ENCODE measurements at regions of chr5 and their contacts with region 1.

Region 1: GRCh38 chr5:177592010-177592834 is at the start of gene TMED9:
- DNase-seq: peak; percentile 81 to 93 (median 86)
- ATAC-seq: peak; percentile 81 to 99 (median 97)
- H3K4me3 ChIP-seq: peak within 1 kb of the TSS; percentile 73 to 99 (median 84)
- H3K27ac ChIP-seq: peak within 1 kb of the TSS in 11 of 12 donors; percentile 36 to 89 (median 77)
- H3K4me1 ChIP-seq: peaks cover 0 to 20% (median 14%) of the 10 kb centered on the region in 12 donors
- H3K27me3 ChIP-seq: peaks cover 0 to 15% (median 0%) of the 10 kb centered on the region in 9 donors
- CTCF ChIP-seq: peak in 5 of 12 donors; percentile 9 to 45 (median 33)
- POLR2A ChIP-seq: peak; percentile 34 to 93
- total RNA-seq, gene TMED9: 46.2 to 138 (median 77.0) TPM

Region 2: GRCh38 chr5:177516604-177517568 is 75.3 kb before region 1 on chr5 and contains the start of gene DDX41:
- intact Hi-C with region 1: loop called in 2 of 10 experiments (anchors 10 kb)
- DNase-seq: peak; percentile 97 to 99 (median 98)
- ATAC-seq: peak; percentile 91 to 95 (median 92)
- H3K4me3 ChIP-seq: peak within 1 kb of the TSS; percentile 61 to 100 (median 88)
- H3K27ac ChIP-seq: peak within 1 kb of the TSS; percentile 79 to 94 (median 89)
- H3K4me1 ChIP-seq: peaks cover 0 to 33% (median 15%) of the 10 kb centered on the region in 12 donors
- H3K27me3 ChIP-seq: no peaks in the 10 kb centered on the region
- CTCF ChIP-seq: peak in 4 of 12 donors; percentile 8 to 20 (median 13)
- POLR2A ChIP-seq: peak in 1 of 2 donors; percentile 66
- total RNA-seq, gene DDX41: 24.4 to 53.8 (median 37.7) TPM

Region 3: GRCh38 chr5:177537389-177538361 is 54.5 kb before region 1 on chr5:
- intact Hi-C with region 1: loop called in 2 of 10 experiments (anchors 10 kb)
- DNase-seq: peak in 2 of 5 donors; percentile 55 to 68
- ATAC-seq: peak; percentile 52 to 83 (median 64)
- H3K4me3 ChIP-seq: no peak overlapping the region
- H3K27ac ChIP-seq: peak overlapping the region; percentile 42 to 82 (median 64)
- H3K4me1 ChIP-seq: peaks cover 12 to 66% (median 38%) of the 10 kb centered on the region in 12 donors
- H3K27me3 ChIP-seq: no peaks in the 10 kb centered on the region
- CTCF ChIP-seq: no peak
- POLR2A ChIP-seq: no peak

Region 4: DNA sequence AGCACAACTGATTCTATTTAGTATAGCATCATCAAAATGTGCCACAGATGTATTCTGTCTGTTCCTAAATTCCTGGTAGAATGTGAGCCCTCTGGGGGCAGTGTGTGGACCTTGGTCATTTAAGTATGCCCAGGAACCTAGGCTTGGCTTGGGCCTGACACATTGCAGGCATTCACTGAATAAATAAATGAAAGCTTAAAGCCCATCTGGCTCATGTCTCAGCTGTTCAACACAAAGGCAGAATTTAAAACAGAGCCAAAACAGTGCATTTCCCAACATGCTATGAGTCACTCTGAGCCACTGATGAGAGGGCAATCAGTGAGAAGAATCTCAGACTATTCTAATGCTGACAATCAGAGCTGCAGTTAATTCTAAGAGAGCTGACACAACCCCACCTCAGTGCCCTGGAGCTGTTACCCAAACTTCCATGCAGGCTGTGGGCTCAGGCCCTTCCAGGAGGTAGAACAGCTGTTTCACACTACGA is 45.9 kb before region 1 on chr5:
- intact Hi-C with region 1: loop called in 2 of 10 experiments (anchors 5 to 10 kb)
- DNase-seq: peak in 2 of 5 donors; percentile 69 to 72
- ATAC-seq: peak; percentile 38 to 85 (median 78)
- H3K4me3 ChIP-seq: no peak overlapping the region
- H3K27ac ChIP-seq: peak overlapping the region in 11 of 12 donors; percentile 27 to 85 (median 71)
- H3K4me1 ChIP-seq: peaks cover 9 to 78% (median 61%) of the 10 kb centered on the region in 12 donors
- H3K27me3 ChIP-seq: no peaks in the 10 kb centered on the region
- CTCF ChIP-seq: no peak
- POLR2A ChIP-seq: no peak

Region 5: DNA sequence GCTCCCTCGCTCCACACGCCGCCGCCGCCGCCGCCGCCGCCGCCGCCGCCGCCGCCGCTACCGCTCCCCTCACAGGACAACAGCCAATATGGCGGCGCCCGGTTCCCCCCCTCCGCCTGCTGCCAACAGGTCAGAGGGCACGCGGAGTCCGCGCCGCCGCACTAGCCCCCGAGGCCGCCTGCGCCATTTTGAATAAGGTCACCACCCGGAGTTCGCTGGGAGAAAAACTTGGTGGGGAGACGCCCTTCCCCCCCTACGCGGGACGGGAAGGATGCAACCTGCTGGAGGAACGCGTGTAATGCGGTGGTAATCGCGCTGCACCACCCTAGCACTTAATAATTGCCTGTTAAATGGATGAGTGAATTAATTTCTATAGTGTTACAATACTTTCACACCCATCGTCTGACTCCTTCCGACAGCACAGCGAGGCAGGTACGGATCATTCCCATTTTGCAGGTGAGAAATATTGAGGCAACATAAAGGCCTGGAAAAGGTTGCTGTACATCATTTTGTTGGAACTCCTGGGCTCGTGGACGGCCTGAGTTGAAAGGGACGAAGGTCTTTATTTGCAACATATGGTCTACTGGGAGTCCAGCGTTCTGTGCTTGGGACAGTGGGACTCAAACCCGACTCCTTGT is 37.6 kb before region 1 on chr5 and contains the start of gene FAM193B:
- intact Hi-C with region 1: loop called in 3 of 10 experiments (anchors 5 to 10 kb)
- DNase-seq: peak; percentile 93 to 98 (median 95)
- ATAC-seq: peak; percentile 94 to 98 (median 96)
- H3K4me3 ChIP-seq: peak within 1 kb of the TSS; percentile 61 to 99 (median 94)
- H3K27ac ChIP-seq: peak within 1 kb of the TSS; percentile 58 to 89 (median 82)
- H3K4me1 ChIP-seq: peaks cover 3 to 43% (median 26%) of the 10 kb centered on the region in 12 donors
- H3K27me3 ChIP-seq: no peaks in the 10 kb centered on the region
- CTCF ChIP-seq: peak in 7 of 12 donors; percentile 8 to 43 (median 32)
- POLR2A ChIP-seq: peak in 1 of 2 donors; percentile 31
- total RNA-seq, gene FAM193B: 13.1 to 34.4 (median 20.2) TPM

Region 6: DNA sequence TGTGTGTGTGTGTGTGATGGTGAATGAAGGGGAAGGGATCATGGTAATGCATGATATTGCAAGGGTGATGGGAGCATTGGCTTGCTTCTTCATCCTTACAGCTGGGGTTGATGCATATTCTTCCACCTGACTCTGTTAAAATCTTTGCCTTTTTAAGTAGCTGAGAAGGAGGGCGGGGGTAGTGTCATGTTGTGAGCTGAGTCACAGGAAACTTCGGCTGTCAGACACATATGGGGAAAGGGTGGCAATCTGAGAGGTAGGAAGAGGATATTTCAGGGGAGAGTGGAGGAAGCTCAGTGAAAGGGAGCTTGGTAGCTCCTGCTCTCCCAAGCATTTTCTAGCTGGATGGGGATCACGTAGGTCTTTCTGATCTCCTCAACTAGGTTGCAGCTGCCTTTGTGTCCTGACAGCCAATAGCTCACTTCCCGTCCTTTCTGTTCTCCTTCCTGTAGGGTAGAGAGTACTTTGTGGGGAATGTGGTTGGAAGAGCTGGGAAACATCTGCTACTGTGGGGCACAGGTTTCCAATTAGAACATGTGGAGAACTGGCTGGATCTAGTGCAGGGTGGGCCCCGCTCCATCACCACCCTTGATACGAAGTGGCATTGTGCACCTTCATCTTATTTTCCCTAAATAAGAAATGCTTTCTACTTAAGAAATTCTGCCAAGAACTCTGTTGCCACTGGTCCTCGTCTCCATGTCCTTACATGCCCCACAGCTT is 1052.8 kb after region 1 on chr5:
- intact Hi-C with region 1: no loop called
- DNase-seq: no peak
- ATAC-seq: no peak
- H3K4me3 ChIP-seq: no peak overlapping the region
- H3K27ac ChIP-seq: no peak overlapping the region
- H3K4me1 ChIP-seq: no peaks in the 10 kb centered on the region
- H3K27me3 ChIP-seq: no peaks in the 10 kb centered on the region
- CTCF ChIP-seq: no peak
- POLR2A ChIP-seq: no peak